PC-3 (cell line): ENCODE measurements at regions of chr12 and their contacts with region 1.

Region 1: GRCh38 chr12:89192428-89192827 is 159.9 kb downstream of the DUSP6 start:
- DNase-seq: peak; percentile 90
- ATAC-seq: peak; percentile 99
- H3K4me3 ChIP-seq: no peak overlapping the region
- H3K27ac ChIP-seq: peak overlapping the region; percentile 81
- H3K4me1 ChIP-seq: peaks cover 15% of the 10 kb centered on the region
- H3K27me3 ChIP-seq: no peaks in the 10 kb centered on the region
- CTCF ChIP-seq: no peak

Region 2: DNA sequence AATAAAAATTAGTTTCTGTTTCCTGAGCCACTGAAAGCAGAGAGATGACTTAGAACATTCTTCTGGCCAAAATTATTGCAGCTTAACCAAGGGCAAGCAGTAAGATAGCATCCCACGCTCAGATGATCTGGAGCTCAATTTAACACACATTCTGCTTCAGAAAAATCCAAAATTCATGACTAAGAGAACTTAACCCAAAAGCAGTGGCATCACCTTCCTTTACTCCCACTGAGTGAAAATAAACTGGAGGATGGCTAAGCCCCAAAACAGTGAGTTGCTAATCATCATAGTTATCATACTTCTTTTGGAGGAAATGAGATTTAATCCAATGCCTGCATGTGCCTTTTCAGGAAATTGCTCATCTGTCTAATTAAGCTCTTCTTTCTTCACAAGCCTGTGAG is 35.6 kb before region 1 on chr12:
- CTCF ChIA-PET with region 1: no interaction called
- POLR2A ChIA-PET with region 1: no interaction called
- intact Hi-C with region 1: no loop called
- DNase-seq: no peak
- ATAC-seq: no peak
- H3K4me3 ChIP-seq: no peak overlapping the region
- H3K27ac ChIP-seq: no peak overlapping the region
- H3K4me1 ChIP-seq: peaks cover 27% of the 10 kb centered on the region
- H3K27me3 ChIP-seq: no peaks in the 10 kb centered on the region
- CTCF ChIP-seq: no peak

Region 3: DNA sequence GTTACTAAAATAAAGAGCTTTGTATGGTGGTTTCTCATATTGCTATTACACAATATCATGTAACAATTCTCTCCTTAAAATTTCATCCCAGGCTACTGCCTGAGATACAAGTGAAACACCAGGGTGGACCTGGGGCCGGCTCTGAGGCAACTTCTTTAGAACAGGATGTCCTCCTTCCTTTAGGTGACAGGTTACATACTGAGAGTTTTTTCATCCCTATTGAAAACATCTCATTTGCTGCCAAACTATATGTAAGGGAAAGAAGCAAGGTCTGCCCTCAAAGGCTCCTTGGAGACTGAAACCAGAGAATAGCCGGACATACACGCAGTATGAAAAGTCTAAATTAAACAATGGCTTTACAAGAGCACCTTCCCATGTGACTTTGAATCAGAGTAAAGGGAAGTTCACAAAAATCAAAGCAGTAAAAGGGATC is 19.9 kb after region 1 on chr12:
- CTCF ChIA-PET with region 1: no interaction called
- POLR2A ChIA-PET with region 1: no interaction called
- intact Hi-C with region 1: loop called (anchors 1 kb)
- DNase-seq: peak; percentile 64
- ATAC-seq: peak; percentile 91
- H3K4me3 ChIP-seq: no peak overlapping the region
- H3K27ac ChIP-seq: peak overlapping the region; percentile 59
- H3K4me1 ChIP-seq: peaks cover 29% of the 10 kb centered on the region
- H3K27me3 ChIP-seq: no peaks in the 10 kb centered on the region
- CTCF ChIP-seq: no peak